ENCODE measurements at regions of chr15 and their contacts with region 1.

Region 1: DNA sequence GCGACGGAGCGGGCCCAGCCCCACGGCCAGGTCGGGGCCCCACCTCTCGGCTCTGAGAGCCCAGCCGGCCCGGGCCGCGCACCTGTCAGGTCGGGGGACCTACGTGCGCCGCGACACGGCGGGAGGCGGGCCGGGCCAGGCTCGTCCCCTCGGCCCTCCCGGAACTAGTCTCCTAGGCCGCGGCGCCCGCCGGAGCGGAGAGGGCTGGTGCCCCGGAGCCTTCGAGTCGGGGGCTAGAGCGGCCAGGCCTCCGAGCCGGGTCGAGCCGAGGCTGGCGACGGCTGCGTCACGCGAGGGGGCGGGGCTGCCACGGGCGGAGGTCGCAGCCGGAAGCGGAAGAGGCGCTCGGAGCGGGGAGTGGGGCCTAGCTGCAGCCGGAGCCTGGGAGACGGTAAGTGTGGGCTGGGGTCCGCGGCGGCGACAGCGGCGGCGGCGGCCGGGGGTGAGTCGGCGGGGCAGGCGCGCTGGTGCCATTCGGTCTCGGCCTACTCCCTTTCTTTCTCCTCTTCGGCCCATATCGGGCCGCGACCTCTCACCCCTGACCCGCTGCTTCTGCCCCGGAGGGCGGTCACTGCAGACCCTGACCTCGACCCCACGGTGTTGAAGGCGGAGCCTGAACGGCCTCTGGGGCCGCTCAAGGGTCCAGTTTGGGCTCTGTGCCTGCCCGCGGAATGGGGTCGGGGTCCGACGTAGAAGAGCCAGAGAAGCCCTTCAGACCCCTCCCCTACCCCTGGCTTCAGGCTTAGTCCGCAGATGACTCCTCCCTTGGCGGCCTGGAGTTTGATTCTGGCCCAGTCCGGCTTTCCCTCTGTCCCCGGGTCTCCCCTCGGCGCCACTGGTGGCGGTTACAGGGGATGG is at the start of gene CLK3:
- DNase-seq: peak; percentile 92 to 98 (median 96)
- ATAC-seq: peak; percentile 83
- H3K4me3 ChIP-seq: peak within 1 kb of the TSS; percentile 79
- H3K4me3 Mint-ChIP-seq: peak within 1 kb of the TSS; percentile 91 to 96 (median 93)
- H3K27ac ChIP-seq: peak within 1 kb of the TSS; percentile 100
- H3K27ac Mint-ChIP-seq: peak within 1 kb of the TSS; percentile 92 to 98 (median 95)
- H3K4me1 ChIP-seq: peaks cover 23 to 30% of the 10 kb centered on the region in 2 donors
- H3K4me1 Mint-ChIP-seq: peaks cover 31 to 45% (median 43%) of the 10 kb centered on the region in 7 donors
- H3K27me3 ChIP-seq: no peaks in the 10 kb centered on the region
- H3K27me3 Mint-ChIP-seq: no peaks in the 10 kb centered on the region
- total RNA-seq, gene CLK3: 131 to 273 (median 177) TPM

Region 2: GRCh38 chr15:74433592-74434262 is 182.0 kb before region 1 on chr15 and contains the start of gene SEMA7A:
- CTCF ChIA-PET with region 1: no interaction called
- POLR2A ChIA-PET with region 1: no interaction called
- intact Hi-C with region 1: loop called in 1 of 2 experiments (anchors 10 kb)
- DNase-seq: peak; percentile 32 to 90 (median 53)
- ATAC-seq: peak; percentile 87
- H3K4me3 ChIP-seq: peak within 1 kb of the TSS; percentile 50
- H3K4me3 Mint-ChIP-seq: peak within 1 kb of the TSS; percentile 72 to 88 (median 78)
- H3K27ac ChIP-seq: no peak within 1 kb of the TSS
- H3K27ac Mint-ChIP-seq: peak within 1 kb of the TSS in 4 of 9 donors; percentile 65 to 89 (median 72)
- H3K4me1 ChIP-seq: peaks cover 6 to 35% of the 10 kb centered on the region in 2 donors
- H3K4me1 Mint-ChIP-seq: peaks cover 7 to 57% (median 16%) of the 10 kb centered on the region in 7 donors
- H3K27me3 ChIP-seq: no peaks in the 10 kb centered on the region
- H3K27me3 Mint-ChIP-seq: peaks cover 0 to 3% (median 0%) of the 10 kb centered on the region in 5 donors
- total RNA-seq, gene SEMA7A: 1.6 to 15.7 (median 5.0) TPM

Region 3: GRCh38 chr15:74545880-74546656 is 69.7 kb before region 1 on chr15:
- CTCF ChIA-PET with region 1: interaction called, 3 read pairs
- POLR2A ChIA-PET with region 1: interaction called, 41 read pairs
- intact Hi-C with region 1: loop called (anchors 1 kb)
- DNase-seq: peak; percentile 51 to 91 (median 57)
- ATAC-seq: peak; percentile 73
- H3K4me3 ChIP-seq: no peak overlapping the region
- H3K4me3 Mint-ChIP-seq: peak overlapping the region; percentile 55 to 84 (median 73)
- H3K27ac ChIP-seq: peak overlapping the region; percentile 58
- H3K27ac Mint-ChIP-seq: peak overlapping the region; percentile 7 to 90 (median 74)
- H3K4me1 ChIP-seq: peaks cover 36 to 51% of the 10 kb centered on the region in 2 donors
- H3K4me1 Mint-ChIP-seq: peaks cover 58 to 87% (median 77%) of the 10 kb centered on the region in 7 donors
- H3K27me3 ChIP-seq: no peaks in the 10 kb centered on the region
- H3K27me3 Mint-ChIP-seq: no peaks in the 10 kb centered on the region

Region 4: GRCh38 chr15:74695597-74696397 is 80.1 kb after region 1 on chr15 and contains the start of gene EDC3:
- CTCF ChIA-PET with region 1: no interaction called
- POLR2A ChIA-PET with region 1: interaction called, 3 read pairs
- intact Hi-C with region 1: loop called in 1 of 2 experiments (anchors 1 kb)
- DNase-seq: peak; percentile 69 to 87 (median 84)
- ATAC-seq: peak; percentile 93
- H3K4me3 ChIP-seq: peak within 1 kb of the TSS; percentile 71
- H3K4me3 Mint-ChIP-seq: peak within 1 kb of the TSS; percentile 96 to 100 (median 100)
- H3K27ac ChIP-seq: peak within 1 kb of the TSS; percentile 86
- H3K27ac Mint-ChIP-seq: peak within 1 kb of the TSS; percentile 97 to 100 (median 99)
- H3K4me1 ChIP-seq: peaks cover 12 to 14% of the 10 kb centered on the region in 2 donors
- H3K4me1 Mint-ChIP-seq: peaks cover 27 to 54% (median 48%) of the 10 kb centered on the region in 7 donors
- H3K27me3 ChIP-seq: no peaks in the 10 kb centered on the region
- H3K27me3 Mint-ChIP-seq: peaks cover 0 to 3% (median 0%) of the 10 kb centered on the region in 5 donors
- total RNA-seq, gene EDC3: 29.0 to 45.3 (median 38.7) TPM

Region 5: DNA sequence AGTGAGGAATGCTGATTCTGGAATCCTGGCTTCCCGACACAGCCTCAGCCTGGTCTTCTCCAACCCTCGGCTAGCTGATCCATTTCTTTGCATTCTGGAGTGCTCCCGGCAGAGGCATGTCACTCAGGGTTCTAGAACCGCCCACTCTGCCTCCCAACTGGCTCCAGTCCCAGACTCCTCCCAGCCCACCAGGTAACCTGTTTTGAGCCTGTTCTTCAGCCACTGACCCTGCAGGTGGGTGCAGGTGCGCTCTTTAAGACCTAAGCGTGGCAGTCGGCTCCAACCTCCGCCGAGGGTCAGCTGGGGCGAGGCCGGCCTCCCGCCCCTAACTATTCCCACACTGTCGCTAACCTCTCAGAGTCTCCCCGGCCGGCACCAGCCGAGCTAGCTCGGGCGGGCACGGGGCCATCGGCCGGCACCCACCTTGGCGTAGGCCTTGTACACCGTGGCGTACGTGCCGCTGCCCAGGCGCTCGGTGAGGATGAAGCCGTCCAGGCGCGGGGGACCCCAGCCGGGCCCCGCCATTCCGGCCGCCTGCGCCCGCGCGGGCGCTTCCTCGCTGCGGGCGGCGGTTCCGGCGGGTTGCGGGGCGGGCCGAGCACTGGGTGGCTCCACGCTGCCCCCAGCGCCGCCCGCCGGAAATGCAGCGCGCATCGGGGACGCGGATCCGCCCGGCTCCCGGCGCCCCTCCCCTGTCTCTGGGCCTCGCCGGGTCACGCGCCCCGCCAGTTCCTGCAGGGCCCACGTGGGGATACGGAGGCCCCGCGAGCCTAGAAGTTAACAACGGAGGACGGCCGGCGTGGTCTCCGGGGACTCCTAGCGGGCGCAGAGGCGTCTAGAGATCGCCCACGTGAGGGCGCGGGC is 227.1 kb after region 1 on chr15 and contains the start of gene ULK3:
- CTCF ChIA-PET with region 1: no interaction called
- POLR2A ChIA-PET with region 1: no interaction called
- intact Hi-C with region 1: loop called in 1 of 2 experiments (anchors 1 kb)
- DNase-seq: peak; percentile 89 to 97 (median 93)
- ATAC-seq: peak; percentile 97
- H3K4me3 ChIP-seq: peak within 1 kb of the TSS; percentile 74
- H3K4me3 Mint-ChIP-seq: peak within 1 kb of the TSS; percentile 80 to 95 (median 90)
- H3K27ac ChIP-seq: peak within 1 kb of the TSS; percentile 79
- H3K27ac Mint-ChIP-seq: peak within 1 kb of the TSS; percentile 88 to 95 (median 94)
- H3K4me1 ChIP-seq: peaks cover 40 to 50% of the 10 kb centered on the region in 2 donors
- H3K4me1 Mint-ChIP-seq: peaks cover 26 to 62% (median 50%) of the 10 kb centered on the region in 7 donors
- H3K27me3 ChIP-seq: no peaks in the 10 kb centered on the region
- H3K27me3 Mint-ChIP-seq: no peaks in the 10 kb centered on the region
- total RNA-seq, gene ULK3: 53.2 to 106 (median 59.2) TPM

Region 6: GRCh38 chr15:74956648-74957300 is 341.0 kb after region 1 on chr15 and contains the start of gene RPP25:
- CTCF ChIA-PET with region 1: no interaction called
- POLR2A ChIA-PET with region 1: interaction called, 6 read pairs
- intact Hi-C with region 1: loop called in 1 of 2 experiments (anchors 1 kb)
- DNase-seq: peak; percentile 32 to 82 (median 49)
- ATAC-seq: peak; percentile 92
- H3K4me3 ChIP-seq: peak within 1 kb of the TSS; percentile 67
- H3K4me3 Mint-ChIP-seq: peak within 1 kb of the TSS; percentile 68 to 83 (median 81)
- H3K27ac ChIP-seq: peak within 1 kb of the TSS; percentile 1
- H3K27ac Mint-ChIP-seq: no peak within 1 kb of the TSS
- H3K4me1 ChIP-seq: peaks cover 17 to 23% of the 10 kb centered on the region in 2 donors
- H3K4me1 Mint-ChIP-seq: peaks cover 14 to 40% (median 31%) of the 10 kb centered on the region in 7 donors
- H3K27me3 ChIP-seq: peaks cover 9 to 10% of the 10 kb centered on the region in 2 donors
- H3K27me3 Mint-ChIP-seq: peaks cover 25 to 47% (median 27%) of the 10 kb centered on the region in 5 donors
- total RNA-seq, gene RPP25: 0.95 to 5.8 (median 3.3) TPM